Panc1 (cell line): ENCODE measurements at regions of chr6 and their contacts with region 1.

Region 1: DNA sequence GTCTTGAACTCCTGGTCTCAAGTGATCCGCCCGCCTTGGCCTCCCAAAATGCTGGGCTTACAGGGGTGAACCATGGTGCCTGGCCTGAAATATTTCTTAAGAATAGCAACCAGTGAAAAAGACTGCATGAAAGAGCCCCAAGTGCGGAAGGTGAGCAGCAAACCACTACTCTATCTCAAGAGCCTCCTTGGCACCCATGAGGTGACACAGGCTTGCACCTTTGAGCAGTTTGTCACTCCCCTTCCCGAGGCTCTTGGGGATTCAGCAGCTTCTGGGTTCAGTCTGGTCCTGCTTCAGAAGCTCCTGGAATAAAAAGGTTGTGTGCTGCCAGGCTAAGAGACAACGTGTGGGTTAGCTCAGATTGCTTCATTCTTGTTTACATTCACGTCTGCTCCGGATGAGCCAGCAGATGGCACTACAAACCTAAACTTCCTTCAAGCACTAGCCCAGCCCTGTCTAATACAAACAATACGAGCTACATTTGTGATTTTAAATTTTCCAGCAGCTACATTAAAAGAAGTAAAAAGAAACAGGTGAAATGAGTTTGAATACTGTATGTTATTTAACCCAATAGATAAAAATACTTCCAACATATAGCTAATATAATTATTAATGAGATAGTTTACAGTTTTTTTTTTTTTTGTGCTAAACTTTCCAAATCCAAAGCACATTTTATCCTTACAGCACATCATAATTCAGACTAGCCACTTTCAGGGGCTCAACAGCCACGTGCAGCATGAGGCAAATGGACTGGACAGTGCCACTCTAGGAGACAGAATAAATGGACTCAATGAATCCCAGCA is 46.2 kb downstream of the GJA10 start:
- DNase-seq: peak; percentile 67
- ATAC-seq: peak; percentile 95
- H3K4me3 ChIP-seq: no peak overlapping the region
- H3K27ac ChIP-seq: peak overlapping the region; percentile 73
- H3K4me1 ChIP-seq: peaks cover 2% of the 10 kb centered on the region; the same call in 1 of the 2 replicates
- H3K27me3 ChIP-seq: no peaks in the 10 kb centered on the region
- CTCF ChIP-seq: peak; percentile 80

Region 2: DNA sequence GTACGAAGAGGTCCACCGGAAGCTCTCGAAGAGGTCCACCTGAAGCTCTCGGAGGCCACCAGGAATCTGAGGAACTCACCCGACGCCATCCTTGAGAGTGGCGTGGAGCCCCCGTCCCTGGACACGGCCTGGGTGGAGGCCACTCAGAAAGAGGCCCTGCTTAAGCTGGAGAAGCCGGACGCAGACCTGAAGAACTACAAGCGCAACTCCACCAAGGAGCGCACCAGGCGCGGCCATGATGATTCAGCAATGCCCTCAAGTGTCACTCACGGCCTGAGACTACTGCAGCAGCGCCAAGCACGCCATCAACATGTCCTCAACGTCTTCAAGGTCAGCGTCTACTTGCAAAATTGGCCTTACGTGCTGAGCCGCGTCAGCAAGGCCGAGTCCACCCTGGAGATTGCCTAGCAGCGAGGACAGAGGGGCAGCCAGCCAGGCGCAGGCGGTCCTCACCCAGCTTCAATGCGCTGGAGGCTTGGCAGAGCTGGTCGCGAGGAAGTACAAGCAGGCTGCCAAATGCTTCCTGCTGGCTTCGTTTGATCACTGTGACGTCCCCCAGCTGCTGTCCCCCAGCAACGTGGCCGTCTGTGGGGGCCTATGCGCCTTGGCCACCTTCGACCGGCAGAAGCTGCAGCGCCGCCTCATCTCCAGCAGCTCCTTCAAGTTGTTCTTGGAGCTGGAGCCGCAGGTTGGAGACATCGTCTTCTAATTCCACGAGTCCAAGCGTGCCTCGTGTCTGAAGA is 53.9 kb before region 1 on chr6:
- CTCF ChIA-PET with region 1: interaction called, 10 read pairs
- POLR2A ChIA-PET with region 1: no interaction called
- in situ Hi-C with region 1: no loop called
- intact Hi-C with region 1: no loop called
- DNase-seq: no peak
- ATAC-seq: no peak
- H3K4me3 ChIP-seq: no peak overlapping the region
- H3K27ac ChIP-seq: no peak overlapping the region
- H3K4me1 ChIP-seq: no peaks in the 10 kb centered on the region
- H3K27me3 ChIP-seq: no peaks in the 10 kb centered on the region; the same call in 1 of the 2 replicates
- CTCF ChIP-seq: no peak

Region 3: DNA sequence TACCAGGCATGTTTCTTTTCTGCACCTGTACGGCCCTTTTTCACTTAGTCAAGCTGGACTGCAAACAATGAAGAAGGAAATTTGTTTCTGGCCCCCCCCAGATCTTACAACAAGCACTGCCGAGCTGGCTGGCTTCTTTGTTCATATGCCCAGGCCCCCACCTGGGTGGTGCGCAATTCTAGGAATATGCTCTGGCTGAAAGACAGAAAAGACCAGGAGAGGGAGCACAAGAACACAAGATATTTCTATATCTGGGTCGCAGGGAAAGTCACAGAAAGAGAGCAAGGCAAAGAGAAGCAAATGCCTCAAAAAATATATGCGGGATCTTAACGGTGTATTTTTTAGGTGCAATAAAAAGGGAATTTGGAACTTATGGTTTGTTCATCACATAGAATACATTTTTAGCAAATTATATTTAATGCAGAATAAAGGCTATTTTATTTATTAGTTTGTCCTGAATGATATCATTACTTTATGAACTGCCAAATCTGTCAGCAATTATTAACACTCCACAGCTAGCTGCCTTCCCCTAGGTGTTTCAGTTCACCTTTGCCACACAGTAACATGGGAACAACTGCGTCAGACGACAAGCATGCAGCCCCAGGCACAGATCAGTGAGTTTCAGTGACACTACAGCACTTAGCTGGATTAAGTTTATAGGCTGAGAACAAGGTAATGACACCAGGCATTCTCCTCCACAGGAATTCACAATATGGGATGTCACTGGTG is 30.3 kb after region 1 on chr6:
- CTCF ChIA-PET with region 1: interaction called, 13 read pairs
- POLR2A ChIA-PET with region 1: no interaction called
- in situ Hi-C with region 1: no loop called
- intact Hi-C with region 1: loop called (anchors 2 kb)
- DNase-seq: no peak
- ATAC-seq: peak; percentile 89
- H3K4me3 ChIP-seq: no peak overlapping the region
- H3K27ac ChIP-seq: no peak overlapping the region
- H3K4me1 ChIP-seq: no peaks in the 10 kb centered on the region; the same call in 1 of the 2 replicates
- H3K27me3 ChIP-seq: no peaks in the 10 kb centered on the region
- CTCF ChIP-seq: peak; percentile 72

Region 4: GRCh38 chr6:90098001-90098531 is 157.6 kb after region 1 on chr6:
- CTCF ChIA-PET with region 1: no interaction called
- POLR2A ChIA-PET with region 1: no interaction called
- in situ Hi-C with region 1: no loop called
- intact Hi-C with region 1: no loop called
- DNase-seq: no peak
- ATAC-seq: no peak
- H3K4me3 ChIP-seq: no peak overlapping the region
- H3K27ac ChIP-seq: no peak overlapping the region
- H3K4me1 ChIP-seq: no peaks in the 10 kb centered on the region
- H3K27me3 ChIP-seq: no peaks in the 10 kb centered on the region; the same call in 1 of the 2 replicates
- CTCF ChIP-seq: peak; percentile 37; the same call in 1 of the 2 replicates

Region 5: DNA sequence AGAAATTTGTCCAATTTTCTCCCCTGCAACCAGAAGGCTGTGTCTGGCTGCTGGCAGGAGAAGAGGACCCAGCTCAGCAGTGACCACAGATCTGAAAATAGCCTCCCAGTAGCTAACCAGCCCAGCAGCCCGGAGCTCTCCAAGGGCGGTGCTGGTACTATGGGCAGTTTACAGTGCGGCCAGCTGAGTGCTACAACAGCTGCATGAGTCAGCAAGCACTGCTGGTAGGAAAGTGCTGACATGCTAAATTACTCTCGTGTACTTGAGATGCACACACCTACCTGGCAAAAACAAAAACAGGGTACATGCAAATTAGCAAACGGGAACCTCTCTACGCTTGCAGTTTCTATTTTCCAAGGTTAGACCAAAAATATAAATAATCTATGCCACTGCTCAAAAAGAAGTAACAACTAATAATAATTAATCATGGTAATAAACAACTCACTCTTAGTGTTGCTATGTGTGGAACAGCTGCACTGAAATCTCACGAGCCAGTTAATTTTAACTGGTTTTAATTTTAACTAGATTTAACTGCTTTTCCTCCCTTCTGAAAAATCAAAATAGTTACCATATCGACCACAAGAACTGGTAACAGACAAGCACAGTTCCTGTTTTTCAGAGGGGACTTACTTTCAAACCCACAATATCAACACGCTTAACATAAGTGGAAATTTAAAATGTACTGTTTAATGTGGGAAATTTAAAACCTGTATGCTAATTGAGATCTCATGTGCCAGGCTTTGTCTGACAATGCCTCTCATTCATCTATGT is 345.4 kb after region 1 on chr6:
- CTCF ChIA-PET with region 1: interaction called, 4 read pairs
- POLR2A ChIA-PET with region 1: no interaction called
- in situ Hi-C with region 1: no loop called
- intact Hi-C with region 1: loop called (anchors 5 kb)
- DNase-seq: peak; percentile 59
- ATAC-seq: peak; percentile 95
- H3K4me3 ChIP-seq: peak overlapping the region in 1 of 2 experiments; percentile 49; a peak in 2 of 4 replicates
- H3K27ac ChIP-seq: peak overlapping the region; percentile 80
- H3K4me1 ChIP-seq: peaks cover 27% of the 10 kb centered on the region
- H3K27me3 ChIP-seq: no peaks in the 10 kb centered on the region
- CTCF ChIP-seq: no peak

Region 6: GRCh38 chr6:90478789-90479602 is 538.6 kb after region 1 on chr6:
- CTCF ChIA-PET with region 1: interaction called, 24 read pairs
- POLR2A ChIA-PET with region 1: no interaction called
- in situ Hi-C with region 1: no loop called
- intact Hi-C with region 1: loop called (anchors 1 kb)
- DNase-seq: peak; percentile 84
- ATAC-seq: peak; percentile 99
- H3K4me3 ChIP-seq: no peak overlapping the region
- H3K27ac ChIP-seq: no peak overlapping the region
- H3K4me1 ChIP-seq: peaks cover 6% of the 10 kb centered on the region
- H3K27me3 ChIP-seq: no peaks in the 10 kb centered on the region
- CTCF ChIP-seq: peak; percentile 86